ENCODE measurements at regions of chr3 and their contacts with region 1.

Region 1: DNA sequence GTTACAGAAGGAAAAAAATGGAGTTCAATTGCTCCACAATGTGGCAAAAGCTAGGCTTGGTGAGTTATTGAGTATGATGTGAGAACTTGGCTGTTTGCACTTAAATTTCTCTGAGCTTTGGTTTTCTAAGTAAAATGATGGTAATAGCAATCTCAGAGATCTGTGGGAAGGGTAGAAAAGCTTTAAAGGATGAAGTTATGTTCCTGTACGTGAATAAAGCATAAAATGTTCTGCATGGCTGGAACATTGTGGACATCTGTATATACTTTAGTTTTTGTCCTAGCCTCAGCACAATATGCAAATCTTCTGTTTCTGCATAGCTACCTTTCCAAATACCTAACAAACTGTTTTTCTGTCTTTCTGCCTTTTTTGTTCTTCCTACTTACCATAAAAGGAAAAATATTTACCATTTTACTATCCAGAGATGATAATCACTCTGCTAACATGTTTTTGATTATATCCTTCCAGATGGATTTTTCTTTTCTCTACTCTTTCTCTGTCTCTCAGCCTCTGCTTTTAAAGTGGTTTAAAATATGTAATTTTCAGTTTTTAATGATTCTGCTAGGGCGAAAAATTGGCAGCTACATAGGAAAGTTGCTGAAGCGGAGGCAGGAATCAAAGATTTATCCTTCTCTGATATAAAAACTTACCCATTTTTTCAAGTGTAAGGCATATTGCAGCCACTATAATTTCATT is 188.1 kb downstream of the FNDC3B start:
- DNase-seq: no peak
- ATAC-seq: no peak
- H3K4me3 ChIP-seq: no peak overlapping the region
- H3K4me3 Mint-ChIP-seq: no peak overlapping the region
- H3K27ac ChIP-seq: no peak overlapping the region
- H3K27ac Mint-ChIP-seq: no peak overlapping the region
- H3K4me1 ChIP-seq: no peaks in the 10 kb centered on the region
- H3K4me1 Mint-ChIP-seq: no peaks in the 10 kb centered on the region
- H3K27me3 ChIP-seq: no peaks in the 10 kb centered on the region
- H3K27me3 Mint-ChIP-seq: no peaks in the 10 kb centered on the region
- CTCF ChIP-seq: no peak

Region 2: DNA sequence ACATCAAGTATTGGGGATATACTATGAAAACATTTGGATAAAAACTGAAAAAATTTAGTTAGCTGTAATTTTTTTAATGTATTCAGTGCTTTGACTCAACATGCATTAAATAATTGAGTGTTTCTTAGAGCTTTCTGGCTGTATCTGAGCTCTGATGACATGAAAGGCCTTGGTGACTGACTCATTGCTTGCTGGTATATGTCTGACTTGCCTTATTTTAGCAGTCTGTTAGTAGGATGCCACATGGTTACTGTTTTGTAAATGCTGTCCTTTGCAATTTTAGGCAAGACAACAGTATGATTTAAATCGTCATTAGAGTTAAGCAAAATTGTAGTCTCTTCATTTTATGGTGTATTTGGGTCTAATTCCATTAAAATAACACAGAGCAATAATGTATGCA is 21.6 kb after region 1 on chr3:
- CTCF ChIA-PET with region 1: interaction called, 10 read pairs
- POLR2A ChIA-PET with region 1: no interaction called
- intact Hi-C with region 1: no loop called
- DNase-seq: no peak
- ATAC-seq: no peak
- H3K4me3 ChIP-seq: no peak overlapping the region
- H3K4me3 Mint-ChIP-seq: no peak overlapping the region
- H3K27ac ChIP-seq: no peak overlapping the region
- H3K27ac Mint-ChIP-seq: no peak overlapping the region
- H3K4me1 ChIP-seq: no peaks in the 10 kb centered on the region
- H3K4me1 Mint-ChIP-seq: no peaks in the 10 kb centered on the region
- H3K27me3 ChIP-seq: no peaks in the 10 kb centered on the region
- H3K27me3 Mint-ChIP-seq: no peaks in the 10 kb centered on the region
- CTCF ChIP-seq: no peak

Region 3: GRCh38 chr3:172501560-172501959 is 274.1 kb after region 1 on chr3:
- CTCF ChIA-PET with region 1: no interaction called
- POLR2A ChIA-PET with region 1: no interaction called
- intact Hi-C with region 1: no loop called
- DNase-seq: no peak
- ATAC-seq: no peak
- H3K4me3 ChIP-seq: no peak overlapping the region
- H3K4me3 Mint-ChIP-seq: no peak overlapping the region
- H3K27ac ChIP-seq: no peak overlapping the region
- H3K27ac Mint-ChIP-seq: no peak overlapping the region
- H3K4me1 ChIP-seq: no peaks in the 10 kb centered on the region
- H3K4me1 Mint-ChIP-seq: no peaks in the 10 kb centered on the region
- H3K27me3 ChIP-seq: peaks cover 0 to 3% (median 0%) of the 10 kb centered on the region in 4 experiments
- H3K27me3 Mint-ChIP-seq: no peaks in the 10 kb centered on the region
- CTCF ChIP-seq: no peak

Measured in B cell (primary cell).